ENCODE measurements at regions of chr14 and their contacts with region 1.

Region 1: DNA sequence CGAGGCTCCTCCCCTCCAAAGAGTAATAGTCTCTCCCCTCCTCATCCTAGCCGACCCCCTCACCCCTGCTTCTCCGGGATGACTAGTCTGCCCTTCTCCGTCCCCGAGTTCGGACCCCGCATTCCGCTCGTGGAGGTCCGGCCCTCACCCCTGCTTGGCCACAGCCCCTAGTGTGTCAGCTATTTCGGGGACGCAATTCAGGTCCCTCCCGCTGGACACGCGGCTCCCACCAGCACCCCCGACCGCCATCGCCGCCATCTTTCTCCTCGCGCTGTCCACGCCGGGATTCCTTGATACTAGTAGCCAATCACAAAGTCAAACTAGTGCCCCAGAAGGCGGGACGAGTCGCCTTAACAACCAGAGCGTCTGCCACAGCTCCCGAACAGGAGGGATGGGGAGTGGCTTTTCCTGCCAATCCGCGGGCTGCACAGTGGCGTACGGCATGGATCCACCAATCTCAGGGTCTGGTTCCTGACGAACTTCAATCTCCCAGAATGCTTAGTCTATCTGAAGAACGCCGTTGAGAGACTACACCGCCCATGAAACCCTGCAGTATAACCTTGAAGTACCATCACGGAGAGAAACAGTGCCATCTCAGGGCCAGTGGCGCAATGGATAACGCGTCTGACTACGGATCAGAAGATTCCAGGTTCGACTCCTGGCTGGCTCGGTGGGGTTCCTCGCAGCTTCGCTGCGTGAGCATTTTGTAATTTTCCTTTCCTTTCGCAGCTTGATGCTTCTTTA is at the start of gene PRMT5:
- DNase-seq: peak; percentile 98 to 99
- ATAC-seq: peak; percentile 95 to 97
- H3K4me3 ChIP-seq: peak within 1 kb of the TSS; percentile 73
- H3K27ac ChIP-seq: peak within 1 kb of the TSS; percentile 82 to 90
- H3K4me1 ChIP-seq: peaks cover 22% of the 10 kb centered on the region
- CTCF ChIP-seq: no peak
- EP300 ChIP-seq: no peak
- POLR2A ChIP-seq: peak; percentile 97
- RAD21 ChIP-seq: no peak
- polyA plus RNA-seq, gene PRMT5: 214 and 299 TPM in 2 replicates

Region 2: DNA sequence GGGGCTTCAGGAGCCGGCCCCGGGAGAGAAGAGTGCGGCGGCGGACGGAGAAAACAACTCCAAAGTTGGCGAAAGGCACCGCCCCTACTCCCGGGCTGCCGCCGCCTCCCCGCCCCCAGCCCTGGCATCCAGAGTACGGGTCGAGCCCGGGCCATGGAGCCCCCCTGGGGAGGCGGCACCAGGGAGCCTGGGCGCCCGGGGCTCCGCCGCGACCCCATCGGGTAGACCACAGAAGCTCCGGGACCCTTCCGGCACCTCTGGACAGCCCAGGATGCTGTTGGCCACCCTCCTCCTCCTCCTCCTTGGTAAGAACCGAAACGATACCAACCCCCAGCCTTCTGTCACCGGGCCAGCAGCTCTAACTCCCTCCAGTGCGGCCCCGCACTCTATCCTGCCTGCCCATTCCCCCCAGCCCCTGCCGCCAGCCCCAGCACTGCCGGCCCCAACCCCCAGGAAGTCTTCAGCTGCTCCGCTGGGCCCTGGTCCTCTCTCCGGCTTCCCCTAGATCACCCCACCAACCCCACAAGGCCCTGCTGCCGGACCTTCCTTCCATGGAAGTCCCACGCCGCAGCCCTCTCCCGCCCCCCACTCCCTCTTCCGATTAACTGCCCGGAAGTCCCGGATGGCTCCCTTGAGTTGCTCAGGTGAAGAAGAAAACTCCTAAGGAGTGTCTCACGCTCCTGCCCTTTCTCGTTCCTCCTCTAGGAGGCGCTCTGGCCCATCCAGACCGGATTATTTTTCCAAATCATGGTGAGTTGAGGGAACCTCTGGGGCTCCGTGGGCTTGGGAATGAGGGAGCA is 57.0 kb before region 1 on chr14:
- CTCF ChIA-PET with region 1: interaction called, 17 read pairs
- POLR2A ChIA-PET with region 1: interaction called, 12 read pairs
- DNase-seq: peak; percentile 87 to 90
- ATAC-seq: peak; percentile 72 to 82
- H3K4me3 ChIP-seq: peak overlapping the region; percentile 78
- H3K27ac ChIP-seq: peak overlapping the region; percentile 94 to 98
- H3K4me1 ChIP-seq: peaks cover 21% of the 10 kb centered on the region
- CTCF ChIP-seq: peak; percentile 91
- EP300 ChIP-seq: no peak
- POLR2A ChIP-seq: 0 out of 2 replicates have a peak, but pooled peaks have one; percentile 24
- RAD21 ChIP-seq: peak; percentile 69 to 75

Region 3: GRCh38 chr14:22918804-22919600 is 10.3 kb before region 1 on chr14 and contains the start of gene RBM23:
- CTCF ChIA-PET with region 1: interaction called, 44 read pairs
- POLR2A ChIA-PET with region 1: interaction called, 51 read pairs
- DNase-seq: peak; percentile 95 to 100
- ATAC-seq: peak; percentile 96 to 98
- H3K4me3 ChIP-seq: peak within 1 kb of the TSS; percentile 71
- H3K27ac ChIP-seq: peak within 1 kb of the TSS; percentile 87 to 92
- H3K4me1 ChIP-seq: peaks cover 18% of the 10 kb centered on the region
- CTCF ChIP-seq: no peak
- EP300 ChIP-seq: no peak
- POLR2A ChIP-seq: peak; percentile 75
- RAD21 ChIP-seq: no peak
- polyA plus RNA-seq, gene RBM23: 68.0 and 71.7 TPM in 2 replicates

Region 4: GRCh38 chr14:22955702-22956569 is 26.7 kb after region 1 on chr14:
- CTCF ChIA-PET with region 1: interaction called, 70 read pairs
- POLR2A ChIA-PET with region 1: interaction called, 26 read pairs
- DNase-seq: no peak
- ATAC-seq: no peak
- H3K4me3 ChIP-seq: peak overlapping the region; percentile 47
- H3K27ac ChIP-seq: peak overlapping the region; percentile 88 to 97
- H3K4me1 ChIP-seq: peaks cover 14% of the 10 kb centered on the region
- CTCF ChIP-seq: no peak
- EP300 ChIP-seq: no peak
- POLR2A ChIP-seq: no peak
- RAD21 ChIP-seq: no peak

Region 5: GRCh38 chr14:22973217-22974032 is 44.1 kb after region 1 on chr14:
- CTCF ChIA-PET with region 1: interaction called, 47 read pairs
- POLR2A ChIA-PET with region 1: interaction called, 21 read pairs
- DNase-seq: peak; percentile 63 to 79
- ATAC-seq: peak; percentile 24 to 45
- H3K4me3 ChIP-seq: no peak overlapping the region
- H3K27ac ChIP-seq: peak overlapping the region; percentile 98 to 100
- H3K4me1 ChIP-seq: peaks cover 63% of the 10 kb centered on the region
- CTCF ChIP-seq: peak; percentile 83
- EP300 ChIP-seq: no peak
- POLR2A ChIP-seq: no peak
- RAD21 ChIP-seq: peak; percentile 86 to 87

Region 6: GRCh38 chr14:23006544-23007419 is 77.5 kb after region 1 on chr14:
- CTCF ChIA-PET with region 1: interaction called, 5 read pairs
- POLR2A ChIA-PET with region 1: interaction called, 13 read pairs
- DNase-seq: peak; percentile 97 to 99
- ATAC-seq: peak; percentile 96 to 98
- H3K4me3 ChIP-seq: peak overlapping the region; percentile 60
- H3K27ac ChIP-seq: peak overlapping the region; percentile 93
- H3K4me1 ChIP-seq: peaks cover 27% of the 10 kb centered on the region
- CTCF ChIP-seq: peak; percentile 35; the same call in 2 of the 3 replicates
- EP300 ChIP-seq: no peak
- POLR2A ChIP-seq: peak; percentile 81
- RAD21 ChIP-seq: 0 out of 5 replicates have a peak, but pooled peaks of 1 of the 2 experiments have one; percentile 11